ENCODE measurements at regions of chr15 and their contacts with region 1.

Region 1: DNA sequence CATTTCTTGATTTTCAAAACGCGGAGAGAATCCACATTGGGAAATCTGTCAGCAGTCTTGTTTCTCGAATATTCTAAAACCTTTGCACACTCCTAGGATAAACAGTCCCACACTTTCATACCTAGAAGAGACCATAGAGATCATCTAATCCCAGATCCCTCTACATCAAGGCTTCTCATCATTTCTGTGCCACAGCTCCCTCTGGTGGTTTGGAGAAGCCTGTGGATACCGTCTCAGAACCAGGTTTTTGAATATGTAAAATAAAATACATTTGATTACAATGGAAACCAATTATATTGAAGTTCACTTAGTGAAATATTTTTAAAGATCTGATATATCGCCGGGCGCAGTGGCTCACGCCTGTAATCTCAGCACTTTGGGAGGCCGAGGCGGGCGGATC is 211.9 kb upstream of the GOLGA6L4 start:
- DNase-seq: peak; percentile 36
- CTCF ChIP-seq: peak; percentile 46

Region 2: GRCh38 chr15:83734487-83734886 is 289.1 kb before region 1 on chr15:
- CTCF ChIA-PET with region 1: interaction called, 40 read pairs
- POLR2A ChIA-PET with region 1: no interaction called
- DNase-seq: no peak
- CTCF ChIP-seq: peak; percentile 55

Measured in GM10248 (cell line).